ENCODE measurements at regions of chr13 and their contacts with region 1.

Region 1: DNA sequence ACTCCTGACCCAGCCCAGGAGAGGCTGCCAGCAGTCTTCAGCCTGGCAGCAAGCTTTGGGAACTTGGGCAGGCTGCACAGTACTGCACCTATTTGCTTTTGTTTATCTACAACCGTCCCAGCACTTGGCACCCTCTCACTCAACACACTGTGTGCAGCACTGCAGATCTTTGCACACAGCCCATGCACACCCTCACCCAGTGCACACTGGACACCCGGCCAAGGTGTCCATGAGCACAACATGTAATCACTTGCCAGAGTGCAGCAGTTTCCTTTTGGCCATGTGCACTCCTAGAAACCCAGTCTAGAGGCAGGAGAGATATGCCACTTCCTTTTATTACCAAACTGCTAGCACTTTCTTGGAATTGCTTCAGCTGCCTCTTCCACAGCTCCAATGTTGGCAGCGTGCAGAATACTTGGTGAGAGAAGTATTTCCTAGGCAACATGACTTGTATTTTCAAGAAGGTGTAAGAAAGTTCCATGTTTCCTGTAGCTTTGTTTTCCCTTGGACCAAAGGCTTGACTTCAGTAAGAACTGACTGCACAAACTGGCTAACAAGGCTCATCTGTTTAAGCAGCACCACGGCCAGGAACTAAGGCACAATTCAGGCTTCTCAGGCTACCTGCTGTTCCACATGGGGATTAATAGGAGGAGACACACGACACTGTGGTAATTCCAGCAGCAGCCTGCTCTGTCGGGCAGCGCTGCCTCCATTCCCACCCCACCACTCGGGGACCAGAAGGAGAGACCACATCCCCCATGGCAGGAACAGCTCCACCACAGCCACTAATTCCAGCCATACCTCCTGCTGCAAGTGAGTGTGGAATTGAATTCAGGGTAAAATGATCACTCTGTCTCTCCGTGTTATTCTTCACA is 15.3 kb downstream of the ATP7B start:
- DNase-seq: peak; percentile 25
- ATAC-seq: peak; percentile 76 to 86

Region 2: GRCh38 chr13:51590971-51591627 is 404.8 kb before region 1 on chr13:
- intact Hi-C with region 1: no loop called
- DNase-seq: peak; percentile 24
- ATAC-seq: peak; percentile 95 to 98

Region 3: DNA sequence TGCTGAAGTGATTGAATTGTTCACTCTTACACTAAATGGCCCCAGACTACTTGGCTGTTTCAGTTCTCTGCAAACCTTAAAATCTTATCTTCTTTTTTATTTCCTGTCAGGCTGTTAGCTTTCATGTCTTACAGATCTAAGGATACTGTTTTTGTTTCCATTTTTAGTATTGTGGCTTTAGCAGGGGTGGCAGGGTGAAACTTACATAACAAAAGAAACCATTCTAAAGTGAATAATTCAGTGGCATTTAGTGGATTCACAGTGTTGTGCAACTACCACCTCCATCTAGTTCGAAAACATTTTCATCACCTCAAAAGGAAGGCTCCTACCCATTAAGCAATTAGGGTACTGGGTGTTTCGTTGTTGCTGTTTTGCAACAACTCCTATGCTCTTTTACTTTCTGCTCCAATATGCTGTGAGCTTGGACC is 170.7 kb before region 1 on chr13:
- intact Hi-C with region 1: loop called in 1 of 2 experiments (anchors 5 kb)
- DNase-seq: no peak
- ATAC-seq: peak in 1 of 2 donors; percentile 3